ENCODE measurements at regions of chr5 and their contacts with region 1.

Region 1: DNA sequence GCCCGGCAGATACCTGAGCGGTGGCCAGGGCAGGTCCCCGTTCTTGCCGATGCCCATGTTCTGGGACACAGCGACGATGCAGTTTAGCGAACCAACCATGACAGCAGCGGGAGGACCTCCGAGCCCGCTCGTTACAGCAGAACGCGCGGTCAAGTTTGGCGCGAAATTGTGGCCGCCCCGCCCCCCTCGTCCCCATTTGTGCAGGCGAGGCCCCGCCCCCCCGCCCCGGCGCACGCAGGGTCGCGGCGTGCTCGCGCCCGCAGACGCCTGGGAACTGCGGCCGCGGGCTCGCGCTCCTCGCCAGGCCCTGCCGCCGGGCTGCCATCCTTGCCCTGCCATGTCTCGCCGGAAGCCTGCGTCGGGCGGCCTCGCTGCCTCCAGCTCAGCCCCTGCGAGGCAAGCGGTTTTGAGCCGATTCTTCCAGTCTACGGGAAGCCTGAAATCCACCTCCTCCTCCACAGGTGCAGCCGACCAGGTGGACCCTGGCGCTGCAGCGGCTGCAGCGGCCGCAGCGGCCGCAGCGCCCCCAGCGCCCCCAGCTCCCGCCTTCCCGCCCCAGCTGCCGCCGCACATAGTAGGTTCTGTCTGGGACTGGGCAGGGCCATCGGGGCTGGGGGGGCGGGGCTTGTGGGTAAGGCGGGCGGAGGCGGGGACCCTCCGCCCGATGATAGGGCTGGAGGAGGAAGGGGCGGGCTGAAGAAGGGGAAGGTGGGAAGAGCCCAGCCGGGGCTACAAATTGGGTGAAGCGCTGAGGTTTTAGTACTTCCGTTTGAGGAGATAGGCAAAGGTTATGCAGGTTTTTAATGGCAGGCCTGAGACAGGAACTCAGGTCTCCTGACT is at the starts of genes DHFR and MSH3:
- DNase-seq: peak; percentile 91
- H3K4me3 Mint-ChIP-seq: peak within 1 kb of the TSS; percentile 90
- H3K27ac Mint-ChIP-seq: peak within 1 kb of the TSS; percentile 97
- H3K4me1 Mint-ChIP-seq: peaks cover 31% of the 10 kb centered on the region
- H3K27me3 Mint-ChIP-seq: no peaks in the 10 kb centered on the region
- total RNA-seq, gene DHFR: 62.6 to 67.2 TPM
- total RNA-seq, gene MSH3: 20.1 to 21.2 TPM

Region 2: DNA sequence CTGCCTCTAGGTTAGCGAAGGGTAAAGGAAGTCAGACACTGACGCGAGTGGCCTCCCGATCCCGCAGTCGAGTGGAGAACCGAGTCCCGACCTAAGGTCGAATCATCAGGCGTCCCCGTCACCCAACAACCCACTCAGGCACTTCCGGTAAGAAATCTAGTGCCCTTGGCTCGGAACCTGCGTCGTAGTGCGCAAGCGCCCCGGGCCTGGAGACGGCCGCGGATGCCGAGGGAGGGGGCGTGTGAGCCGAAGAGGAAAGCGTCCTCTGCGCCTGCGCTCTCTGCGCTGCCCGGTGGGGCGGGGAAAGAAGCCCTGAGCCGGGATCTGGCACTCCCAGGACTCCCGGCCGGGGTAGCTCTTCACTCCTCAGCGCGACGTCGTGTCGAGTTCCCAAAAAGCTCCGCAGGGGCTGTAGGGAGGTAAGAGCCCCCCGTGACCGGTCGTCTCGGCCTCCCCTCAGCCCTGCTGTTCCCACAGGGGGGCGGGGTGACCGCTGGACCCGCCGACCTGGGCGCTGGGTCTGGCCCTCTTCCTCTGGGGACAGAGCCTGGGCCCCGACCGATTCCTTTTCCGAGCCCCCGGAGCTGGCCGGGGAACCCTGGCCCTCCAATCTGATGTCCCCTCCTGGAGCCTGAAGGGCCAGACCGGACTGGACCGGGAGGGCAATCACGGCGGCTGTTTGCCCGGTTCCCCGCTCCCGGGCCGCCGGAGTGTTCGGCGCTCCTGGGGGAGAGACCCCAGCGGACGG is 246.7 kb before region 1 on chr5 and contains the start of gene ZFYVE16:
- CTCF ChIA-PET with region 1: no interaction called
- POLR2A ChIA-PET with region 1: interaction called, 10 read pairs
- DNase-seq: peak; percentile 96
- H3K4me3 Mint-ChIP-seq: peak within 1 kb of the TSS; percentile 93
- H3K27ac Mint-ChIP-seq: peak within 1 kb of the TSS; percentile 98
- H3K4me1 Mint-ChIP-seq: peaks cover 22% of the 10 kb centered on the region
- H3K27me3 Mint-ChIP-seq: no peaks in the 10 kb centered on the region
- total RNA-seq, gene ZFYVE16: 13.4 to 15.7 TPM

Region 3: GRCh38 chr5:80641353-80641752 is 13.3 kb before region 1 on chr5:
- CTCF ChIA-PET with region 1: interaction called, 3 read pairs
- POLR2A ChIA-PET with region 1: interaction called, 11 read pairs
- DNase-seq: no peak
- H3K4me3 Mint-ChIP-seq: no peak overlapping the region
- H3K27ac Mint-ChIP-seq: no peak overlapping the region
- H3K4me1 Mint-ChIP-seq: peaks cover 22% of the 10 kb centered on the region
- H3K27me3 Mint-ChIP-seq: no peaks in the 10 kb centered on the region

Region 4: GRCh38 chr5:80672140-80672736 is 17.6 kb after region 1 on chr5:
- CTCF ChIA-PET with region 1: interaction called, 13 read pairs
- POLR2A ChIA-PET with region 1: interaction called, 46 read pairs
- DNase-seq: peak; percentile 76
- H3K4me3 Mint-ChIP-seq: no peak overlapping the region
- H3K27ac Mint-ChIP-seq: no peak overlapping the region
- H3K4me1 Mint-ChIP-seq: peaks cover 10% of the 10 kb centered on the region
- H3K27me3 Mint-ChIP-seq: no peaks in the 10 kb centered on the region

Measured in activated CD4-positive, alpha-beta memory T cell treated with anti-CD3 and anti-CD28 coated beads, Interleukin-2, amount 10 ng/mL, durations not matched to agents 7 days and 5 days (primary cell).